ENCODE measurements at regions of chr6 and their contacts with region 1.

Region 1: DNA sequence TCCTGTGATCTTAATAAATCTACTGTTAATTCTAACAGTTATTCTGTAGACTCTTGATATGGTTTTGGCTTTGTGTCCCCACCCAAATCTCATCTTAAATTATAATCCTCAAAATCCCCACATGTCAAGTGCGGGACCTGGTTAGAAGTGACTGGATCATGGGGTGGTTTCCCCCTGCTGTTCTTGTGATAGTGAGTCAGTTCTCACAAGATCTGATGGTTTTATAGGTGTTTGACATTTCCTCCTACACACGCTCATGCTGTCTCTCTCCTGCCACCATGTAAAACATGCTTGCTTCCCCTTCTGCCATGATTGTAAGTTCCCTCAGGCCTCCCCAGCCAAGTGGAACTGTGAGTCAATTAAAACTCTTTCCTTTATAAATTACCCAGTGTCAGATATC is 10.5 kb upstream of the EPB41L2 start:
- DNase-seq: no peak
- H3K4me3 ChIP-seq: no peak overlapping the region
- CTCF ChIP-seq: no peak
- POLR2A ChIP-seq: no peak

Region 2: DNA sequence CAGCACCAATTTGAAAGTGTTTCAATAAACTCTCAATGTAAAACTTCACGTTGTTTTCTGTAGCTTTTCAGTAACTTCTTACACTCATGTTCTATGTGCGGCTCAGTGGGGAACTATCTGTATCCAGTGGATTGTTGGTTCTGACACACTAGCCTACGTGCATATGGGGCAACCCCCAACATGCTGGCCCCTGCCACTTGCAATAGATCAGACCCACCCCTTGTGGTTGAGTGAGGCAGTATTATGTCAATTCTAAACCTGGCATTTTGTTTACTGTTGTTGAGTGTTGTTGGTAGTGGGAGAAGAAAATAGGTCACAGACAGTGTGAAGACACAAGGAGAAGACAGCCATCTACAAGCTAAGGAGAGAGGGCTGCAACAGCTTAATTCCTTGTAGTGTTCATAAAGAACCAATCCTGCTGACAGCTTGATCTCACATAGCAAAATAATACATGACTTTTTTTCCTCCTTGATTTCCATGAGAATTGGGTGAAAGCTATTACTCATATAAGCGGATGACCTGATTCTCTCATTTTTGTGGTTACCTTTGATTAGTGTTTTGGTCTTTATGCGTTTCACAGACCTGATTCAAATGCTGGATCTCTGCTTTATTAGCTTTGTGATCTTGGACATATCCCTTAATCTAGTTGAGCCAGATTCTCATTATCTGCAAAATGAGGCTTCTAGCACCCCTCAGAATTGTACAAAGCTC is 1870.2 kb before region 1 on chr6:
- intact Hi-C with region 1: loop called (anchors 10 kb)
- DNase-seq: no peak
- H3K4me3 ChIP-seq: no peak overlapping the region
- CTCF ChIP-seq: no peak
- POLR2A ChIP-seq: no peak

Region 3: DNA sequence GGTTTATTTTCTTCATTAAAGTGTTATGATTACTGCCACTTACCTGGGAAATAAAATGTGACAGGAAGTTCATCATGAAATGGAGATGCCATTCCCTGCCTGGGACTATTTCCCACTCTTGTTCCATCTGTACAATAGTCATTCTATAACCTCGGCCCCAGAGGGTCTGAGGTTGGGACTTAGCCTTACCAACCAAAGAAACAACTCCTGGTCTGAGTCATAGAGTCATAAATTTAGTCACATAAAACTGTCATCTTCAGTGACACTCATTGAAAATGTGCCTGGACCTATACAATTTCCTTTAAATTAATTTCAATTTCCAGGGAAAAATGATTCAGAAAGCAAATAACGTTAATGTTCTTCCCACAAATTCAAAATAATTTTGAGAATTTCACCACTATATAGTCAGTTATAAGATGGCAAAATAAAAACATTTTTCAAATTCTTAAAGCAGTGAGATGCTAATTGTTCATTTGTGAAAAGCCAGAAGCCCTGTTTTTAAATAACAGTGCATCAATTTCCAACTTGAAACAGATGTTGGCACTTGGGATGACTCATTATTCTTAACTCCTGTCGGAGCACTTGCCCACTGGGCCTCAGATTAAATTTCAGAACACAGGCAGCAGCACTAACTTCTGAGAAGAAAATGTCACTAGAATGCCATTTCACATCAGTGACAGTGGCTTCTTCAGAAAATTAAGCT is 447.6 kb before region 1 on chr6:
- intact Hi-C with region 1: no loop called
- DNase-seq: no peak
- H3K4me3 ChIP-seq: no peak overlapping the region
- CTCF ChIP-seq: no peak
- POLR2A ChIP-seq: no peak

Region 4: GRCh38 chr6:131167773-131168172 is 94.2 kb after region 1 on chr6:
- intact Hi-C with region 1: no loop called
- DNase-seq: no peak
- H3K4me3 ChIP-seq: no peak overlapping the region
- CTCF ChIP-seq: no peak
- POLR2A ChIP-seq: no peak

Region 5: GRCh38 chr6:131383421-131384411 is 310.1 kb after region 1 on chr6:
- intact Hi-C with region 1: no loop called
- DNase-seq: no peak
- H3K4me3 ChIP-seq: no peak overlapping the region
- CTCF ChIP-seq: no peak
- POLR2A ChIP-seq: no peak